Activated CD8-positive, alpha-beta memory T cell treated with anti-CD3 and anti-CD28 coated beads, Interleukin-2, amount 10 ng/mL, durations not matched to agents 7 days and 5 days (primary cell): ENCODE measurements at regions of chr6 and their contacts with region 1.

Region 1: GRCh38 chr6:139547111-139547776 is 172.8 kb upstream of the CITED2 start:
- DNase-seq: no peak
- ATAC-seq: no peak
- H3K4me3 Mint-ChIP-seq: no peak overlapping the region
- H3K27ac Mint-ChIP-seq: no peak overlapping the region
- H3K4me1 Mint-ChIP-seq: peaks cover 34% of the 10 kb centered on the region
- H3K27me3 Mint-ChIP-seq: no peaks in the 10 kb centered on the region

Region 2: DNA sequence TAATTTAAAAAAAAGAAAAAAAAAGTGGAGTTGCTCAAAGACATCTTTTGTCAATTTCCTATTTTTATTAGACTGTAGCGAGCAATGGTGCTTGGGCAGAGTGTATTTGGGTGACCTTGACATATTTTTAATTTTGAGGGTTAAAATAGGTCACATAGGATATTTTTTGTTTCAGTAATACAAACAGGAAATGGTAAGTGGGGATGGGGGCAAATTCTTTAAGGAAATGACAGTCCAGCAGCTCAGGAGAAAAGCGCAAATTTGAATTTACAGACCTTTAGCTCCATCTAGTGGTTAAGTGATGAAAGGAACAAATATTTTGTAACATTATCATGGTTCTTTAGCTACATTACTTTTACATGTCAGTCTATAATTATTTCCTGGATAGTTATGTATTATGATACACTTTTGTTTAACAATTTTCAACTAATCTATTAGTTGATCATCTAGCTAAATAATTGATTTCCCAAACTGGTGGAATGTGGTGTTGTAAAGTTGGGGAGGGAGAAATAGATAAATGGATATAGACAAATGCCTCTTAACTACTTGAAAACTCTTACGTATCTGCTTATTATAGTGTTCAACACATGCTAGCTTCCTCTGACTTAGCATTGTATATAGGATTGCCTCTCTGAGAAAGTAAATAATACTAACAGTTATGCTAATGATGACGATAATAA is 182.8 kb before region 1 on chr6:
- CTCF ChIA-PET with region 1: no interaction called
- DNase-seq: no peak
- ATAC-seq: peak; percentile 28
- H3K4me3 Mint-ChIP-seq: no peak overlapping the region
- H3K27ac Mint-ChIP-seq: peak overlapping the region; percentile 39
- H3K4me1 Mint-ChIP-seq: peaks cover 48% of the 10 kb centered on the region
- H3K27me3 Mint-ChIP-seq: no peaks in the 10 kb centered on the region

Region 3: GRCh38 chr6:139557547-139557946 is 10.3 kb after region 1 on chr6:
- CTCF ChIA-PET with region 1: interaction called, 10 read pairs
- DNase-seq: no peak
- ATAC-seq: no peak
- H3K4me3 Mint-ChIP-seq: no peak overlapping the region
- H3K27ac Mint-ChIP-seq: no peak overlapping the region
- H3K4me1 Mint-ChIP-seq: no peaks in the 10 kb centered on the region
- H3K27me3 Mint-ChIP-seq: no peaks in the 10 kb centered on the region

Region 4: DNA sequence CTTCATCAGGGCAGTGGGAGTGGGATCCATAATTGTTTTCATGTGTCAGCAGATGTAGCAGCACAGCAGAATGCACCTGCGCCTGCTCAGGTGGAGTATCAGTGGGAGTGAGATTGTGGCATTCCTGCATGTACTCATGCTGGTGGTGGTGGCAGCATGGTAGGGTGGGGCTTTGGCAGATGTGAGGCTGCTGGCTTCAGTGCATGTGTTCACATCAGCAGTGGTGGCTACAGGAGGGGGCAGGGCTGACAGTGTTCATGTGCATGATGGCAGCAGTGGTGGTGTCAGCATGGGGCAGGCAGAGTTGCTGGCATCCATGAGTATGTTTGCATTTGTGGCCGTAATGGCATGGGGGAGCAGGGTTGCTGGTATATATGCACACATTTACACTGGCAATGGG is 241.1 kb after region 1 on chr6:
- CTCF ChIA-PET with region 1: no interaction called
- DNase-seq: no peak
- ATAC-seq: no peak
- H3K4me3 Mint-ChIP-seq: no peak overlapping the region
- H3K27ac Mint-ChIP-seq: no peak overlapping the region
- H3K4me1 Mint-ChIP-seq: no peaks in the 10 kb centered on the region
- H3K27me3 Mint-ChIP-seq: no peaks in the 10 kb centered on the region